ENCODE measurements at regions of chr5 and their contacts with region 1.

Region 1: DNA sequence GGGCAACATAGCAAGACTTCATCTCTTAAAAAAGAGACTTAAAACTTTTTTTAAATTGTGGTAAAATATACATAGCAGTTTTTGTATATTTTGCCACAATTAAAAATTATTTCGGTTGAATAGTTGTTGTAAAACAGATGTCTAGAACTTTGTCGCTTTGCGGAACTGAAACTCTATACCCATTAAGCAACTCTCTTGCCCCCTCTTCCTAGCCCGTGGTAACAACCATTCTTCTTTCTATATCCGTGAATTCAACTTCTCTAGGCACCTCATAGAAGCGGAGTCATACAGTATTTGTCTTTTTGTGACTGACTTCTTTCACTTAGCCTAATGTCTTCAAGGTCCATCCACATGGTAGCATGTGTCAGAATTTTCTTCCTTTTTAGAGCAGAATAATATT is 43.3 kb downstream of the SPARC start:
- DNase-seq: no peak

Region 2: DNA sequence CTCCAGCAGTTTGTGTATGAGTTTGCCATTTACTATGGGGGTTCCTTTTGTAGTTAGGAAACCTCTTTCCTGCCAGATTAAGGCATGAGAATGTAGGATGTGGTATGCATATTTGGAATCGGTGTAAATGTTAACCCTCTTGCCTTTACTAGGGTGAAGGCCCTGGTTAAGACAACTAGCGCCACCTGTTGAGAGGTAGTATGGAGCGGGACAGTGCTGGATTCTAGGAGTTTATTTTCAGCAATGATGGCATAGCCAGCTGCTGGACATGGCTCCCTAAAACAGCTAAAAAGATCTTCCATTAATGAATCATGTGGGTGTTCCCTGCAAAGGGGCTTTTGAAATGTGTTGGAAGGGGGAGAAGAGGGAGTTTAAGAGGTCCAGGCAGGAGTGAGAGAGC is 653.7 kb before region 1 on chr5:
- intact Hi-C with region 1: no loop called
- DNase-seq: no peak

Region 3: DNA sequence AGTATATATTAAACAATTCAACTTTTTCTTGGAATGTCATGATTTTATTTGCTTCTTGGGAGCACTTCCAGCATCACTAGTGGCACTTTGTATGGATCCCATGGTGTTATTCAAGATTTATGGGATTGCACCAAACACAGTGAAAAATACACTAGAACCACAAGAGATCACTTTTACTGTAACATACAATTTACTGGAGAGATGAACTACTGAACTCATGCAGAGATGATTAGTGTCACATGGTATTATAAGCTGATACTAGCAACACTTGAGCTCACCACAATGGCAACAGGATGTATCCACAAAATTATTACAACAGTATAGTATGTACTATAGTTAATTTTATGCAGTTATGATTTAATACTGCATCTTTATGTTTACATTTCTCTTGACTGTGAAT is 279.7 kb before region 1 on chr5:
- intact Hi-C with region 1: loop called in 1 of 2 experiments (anchors 5 kb)
- DNase-seq: no peak

Measured in posterior vena cava (tissue), 2 donors.